ENCODE measurements at regions of chr3 and their contacts with region 1.

Region 1: DNA sequence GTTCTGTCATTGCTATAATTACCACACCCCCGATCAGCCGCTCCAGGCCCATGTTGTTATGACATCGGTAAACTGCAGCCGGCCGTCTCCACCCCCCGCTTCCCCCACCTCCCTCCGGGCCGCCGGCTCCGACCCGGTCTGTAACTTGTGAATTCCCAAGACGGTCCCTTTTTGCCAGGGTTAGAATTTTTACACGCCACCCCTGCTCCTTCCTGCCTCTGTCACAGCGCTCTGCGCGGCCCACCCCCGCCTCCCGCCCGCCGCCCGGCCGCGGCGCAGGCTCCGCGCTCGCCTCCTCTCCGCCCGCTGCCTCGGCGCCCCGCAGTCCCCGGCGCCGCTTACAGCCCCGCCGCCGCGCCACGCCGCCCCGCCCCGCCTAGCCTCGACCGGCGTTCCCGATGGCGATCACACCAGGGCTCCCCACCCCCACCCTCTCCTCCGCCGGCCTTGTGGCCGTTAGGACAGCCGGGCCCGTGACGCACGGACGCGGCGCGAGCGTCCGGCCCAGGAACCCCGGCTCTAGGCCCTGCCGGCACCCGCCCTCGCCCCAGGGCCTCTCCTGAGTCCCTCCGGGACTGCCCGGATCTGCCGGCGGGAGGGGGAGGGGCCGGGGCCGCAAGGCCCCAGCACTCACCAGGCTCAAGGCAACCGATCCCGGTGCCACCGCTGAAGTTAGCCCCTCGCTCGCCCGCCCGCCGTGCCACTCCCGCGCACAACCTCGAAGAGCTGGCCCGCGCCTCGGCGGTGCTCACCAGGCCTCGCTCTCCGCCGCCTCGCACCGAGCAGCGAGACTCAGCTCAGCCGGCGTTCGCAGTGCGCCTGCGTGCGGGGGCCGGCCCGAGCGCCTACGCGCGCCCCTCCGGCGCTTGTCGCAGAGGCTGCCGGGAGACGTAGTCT is at the start of gene KPNA1:
- DNase-seq: peak; percentile 93
- ATAC-seq: peak; percentile 93
- H3K4me3 Mint-ChIP-seq: peak within 1 kb of the TSS; percentile 77
- H3K27ac Mint-ChIP-seq: peak within 1 kb of the TSS; percentile 84
- H3K4me1 Mint-ChIP-seq: peaks cover 39% of the 10 kb centered on the region
- H3K27me3 Mint-ChIP-seq: no peaks in the 10 kb centered on the region
- total RNA-seq, gene KPNA1: 37.5 to 42.6 TPM

Region 2: DNA sequence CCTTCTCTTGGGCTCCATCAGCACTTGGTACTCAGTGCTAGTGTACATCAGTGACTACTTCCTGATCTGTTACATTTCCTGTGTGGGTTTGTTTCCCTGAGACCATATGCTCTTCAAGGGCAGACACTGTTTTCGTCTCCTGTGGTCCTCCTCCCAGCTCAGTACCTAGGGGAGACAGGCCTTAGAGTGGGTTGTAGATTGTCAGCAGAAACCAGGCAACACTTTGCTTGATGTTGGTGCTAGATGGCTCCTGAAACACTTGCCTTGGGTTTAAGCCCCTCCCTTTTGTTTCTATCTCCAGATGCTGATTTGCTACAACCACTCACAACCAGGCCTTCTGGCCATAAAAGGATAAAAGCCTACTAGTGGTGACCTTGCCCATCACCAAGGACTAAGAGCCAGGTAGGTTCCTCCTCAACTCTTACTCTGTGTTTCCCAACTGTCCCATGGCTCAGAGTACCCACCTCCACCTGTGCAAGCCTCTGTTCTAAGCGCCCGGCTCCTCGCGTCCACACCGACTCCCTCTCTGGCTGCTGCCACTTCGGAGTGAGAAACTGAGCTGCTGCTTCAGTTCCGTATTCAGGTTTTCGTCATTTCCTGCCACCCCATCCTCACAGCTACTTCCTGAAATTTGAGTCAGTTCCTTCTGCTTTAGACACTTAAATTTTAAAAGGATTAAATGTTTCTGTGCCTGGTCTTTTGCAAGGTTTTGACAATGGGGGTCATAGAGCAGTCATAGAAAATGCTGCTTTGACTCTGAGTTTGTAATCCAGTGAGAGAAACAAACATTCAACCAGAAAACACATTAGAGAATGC is 853.8 kb before region 1 on chr3 and contains the start of gene HCLS1:
- CTCF ChIA-PET with region 1: no interaction called
- POLR2A ChIA-PET with region 1: no interaction called
- intact Hi-C with region 1: loop called in 1 of 2 experiments (anchors 5 kb)
- DNase-seq: peak; percentile 83
- ATAC-seq: peak; percentile 88
- H3K4me3 Mint-ChIP-seq: peak within 1 kb of the TSS; percentile 95
- H3K27ac Mint-ChIP-seq: peak within 1 kb of the TSS; percentile 97
- H3K4me1 Mint-ChIP-seq: peaks cover 50% of the 10 kb centered on the region
- H3K27me3 Mint-ChIP-seq: no peaks in the 10 kb centered on the region
- total RNA-seq, gene HCLS1: 200 to 235 TPM

Region 3: DNA sequence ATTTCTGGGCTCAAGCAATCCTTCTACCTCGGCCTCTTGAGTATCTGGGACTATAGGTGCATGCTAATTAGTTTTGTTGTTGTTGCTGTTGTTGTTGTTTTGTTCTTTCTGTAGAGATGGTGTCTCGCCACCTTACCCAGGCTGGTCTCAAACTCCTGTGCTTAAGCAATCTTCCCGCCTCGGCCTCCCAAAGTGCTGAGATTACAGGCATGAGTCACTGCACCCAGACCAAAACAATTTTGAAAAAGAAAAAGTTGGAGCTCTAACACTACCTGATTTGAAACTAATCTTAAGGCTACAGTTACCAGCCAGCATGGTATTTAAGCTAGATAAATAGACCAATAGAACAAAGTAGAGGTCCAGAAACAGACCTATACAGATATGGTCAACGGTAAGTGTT is 29.4 kb before region 1 on chr3:
- CTCF ChIA-PET with region 1: interaction called, 4 read pairs
- POLR2A ChIA-PET with region 1: interaction called, 3 read pairs
- intact Hi-C with region 1: loop called in 1 of 2 experiments (anchors 1 kb)
- DNase-seq: no peak
- ATAC-seq: no peak
- H3K4me3 Mint-ChIP-seq: no peak overlapping the region
- H3K27ac Mint-ChIP-seq: no peak overlapping the region
- H3K4me1 Mint-ChIP-seq: peaks cover 69% of the 10 kb centered on the region
- H3K27me3 Mint-ChIP-seq: no peaks in the 10 kb centered on the region

Region 4: DNA sequence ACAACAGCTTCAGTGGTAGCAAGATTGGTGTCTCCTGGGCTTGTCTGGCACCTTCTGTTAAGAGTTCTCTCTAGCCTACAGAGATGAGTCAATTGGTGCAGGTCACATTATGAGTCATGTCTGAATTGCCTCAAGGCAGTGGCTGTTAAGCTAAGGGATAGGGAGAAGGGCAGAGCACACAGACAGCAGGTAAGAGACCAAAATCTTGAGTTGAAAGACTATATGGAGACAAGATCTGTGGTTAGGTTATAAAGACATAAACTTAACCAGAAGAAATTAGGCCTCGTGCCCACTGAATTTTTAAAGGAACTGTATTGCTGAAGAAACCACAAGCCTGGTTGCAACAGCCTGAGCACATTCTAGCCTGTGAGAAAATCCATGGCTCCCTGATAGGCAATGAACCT is 19.6 kb after region 1 on chr3:
- CTCF ChIA-PET with region 1: interaction called, 7 read pairs
- POLR2A ChIA-PET with region 1: interaction called, 8 read pairs
- intact Hi-C with region 1: loop called (anchors 2 kb)
- DNase-seq: peak; percentile 67
- ATAC-seq: peak; percentile 99
- H3K4me3 Mint-ChIP-seq: no peak overlapping the region
- H3K27ac Mint-ChIP-seq: no peak overlapping the region
- H3K4me1 Mint-ChIP-seq: peaks cover 34% of the 10 kb centered on the region
- H3K27me3 Mint-ChIP-seq: no peaks in the 10 kb centered on the region

Region 5: GRCh38 chr3:122793568-122794416 is 279.4 kb after region 1 on chr3 and contains the start of gene HSPBAP1:
- CTCF ChIA-PET with region 1: no interaction called
- POLR2A ChIA-PET with region 1: no interaction called
- intact Hi-C with region 1: loop called in 1 of 2 experiments (anchors 5 kb)
- DNase-seq: peak; percentile 93
- ATAC-seq: peak; percentile 67
- H3K4me3 Mint-ChIP-seq: no peak within 1 kb of the TSS
- H3K27ac Mint-ChIP-seq: peak within 1 kb of the TSS; percentile 86
- H3K4me1 Mint-ChIP-seq: peaks cover 32% of the 10 kb centered on the region
- H3K27me3 Mint-ChIP-seq: no peaks in the 10 kb centered on the region
- total RNA-seq, gene HSPBAP1: 3.9 to 4.4 TPM

Region 6: GRCh38 chr3:123314359-123315270 is 800.2 kb after region 1 on chr3:
- CTCF ChIA-PET with region 1: no interaction called
- POLR2A ChIA-PET with region 1: no interaction called
- intact Hi-C with region 1: no loop called
- DNase-seq: no peak
- ATAC-seq: no peak
- H3K4me3 Mint-ChIP-seq: no peak overlapping the region
- H3K27ac Mint-ChIP-seq: no peak overlapping the region
- H3K4me1 Mint-ChIP-seq: no peaks in the 10 kb centered on the region
- H3K27me3 Mint-ChIP-seq: peaks cover 2% of the 10 kb centered on the region